ENCODE measurements at regions of chr1 and their contacts with region 1.

Region 1: GRCh38 chr1:16181887-16182719 is 26.2 kb upstream of the EPHA2 start:
- DNase-seq: peak; percentile 93
- ATAC-seq: peak; percentile 92
- H3K4me3 ChIP-seq: no peak overlapping the region
- H3K27ac ChIP-seq: peak overlapping the region in 1 of 2 donors; percentile 81
- H3K4me1 ChIP-seq: peaks cover 0 to 3% of the 10 kb centered on the region in 2 donors
- H3K27me3 ChIP-seq: no peaks in the 10 kb centered on the region

Region 2: DNA sequence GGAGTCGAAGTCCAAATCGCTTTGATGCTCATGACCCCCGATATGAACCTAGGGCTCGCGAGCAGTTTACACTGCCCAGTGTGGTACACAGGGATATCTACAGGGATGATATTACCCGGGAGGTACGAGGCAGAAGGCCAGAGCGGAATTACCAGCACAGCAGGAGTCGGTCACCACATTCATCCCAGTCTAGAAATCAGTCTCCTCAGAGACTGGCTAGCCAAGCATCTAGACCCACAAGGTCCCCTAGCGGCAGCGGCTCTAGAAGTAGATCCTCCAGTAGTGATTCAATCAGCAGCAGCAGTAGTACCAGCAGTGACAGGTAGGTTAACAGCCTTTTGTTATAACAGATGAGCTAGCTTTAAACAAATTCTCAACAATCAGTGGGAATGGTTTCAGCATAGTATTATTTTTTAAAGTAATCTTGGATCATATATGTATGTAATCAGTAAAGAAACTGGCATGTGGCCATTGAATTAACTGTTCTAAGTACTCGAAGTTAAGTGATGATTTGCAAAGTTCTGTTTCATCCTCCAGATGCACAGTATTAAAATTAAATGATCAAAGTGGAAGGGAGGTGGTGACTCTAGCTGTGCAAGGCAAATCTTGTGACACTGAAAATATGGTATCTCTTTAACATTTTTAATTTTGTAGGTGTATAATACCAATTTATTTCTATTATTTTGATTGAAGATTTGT is 305.6 kb before region 1 on chr1:
- intact Hi-C with region 1: no loop called
- DNase-seq: no peak
- ATAC-seq: no peak
- H3K4me3 ChIP-seq: no peak overlapping the region
- H3K27ac ChIP-seq: no peak overlapping the region
- H3K4me1 ChIP-seq: peaks cover 3 to 8% of the 10 kb centered on the region in 2 donors
- H3K27me3 ChIP-seq: no peaks in the 10 kb centered on the region

Region 3: GRCh38 chr1:16146279-16147155 is 35.6 kb before region 1 on chr1:
- intact Hi-C with region 1: loop called in 1 of 2 experiments (anchors 5 kb)
- DNase-seq: peak; percentile 86 to 93
- ATAC-seq: peak; percentile 75
- H3K4me3 ChIP-seq: no peak overlapping the region
- H3K27ac ChIP-seq: peak overlapping the region; percentile 12 to 83
- H3K4me1 ChIP-seq: no peaks in the 10 kb centered on the region
- H3K27me3 ChIP-seq: no peaks in the 10 kb centered on the region

Region 4: DNA sequence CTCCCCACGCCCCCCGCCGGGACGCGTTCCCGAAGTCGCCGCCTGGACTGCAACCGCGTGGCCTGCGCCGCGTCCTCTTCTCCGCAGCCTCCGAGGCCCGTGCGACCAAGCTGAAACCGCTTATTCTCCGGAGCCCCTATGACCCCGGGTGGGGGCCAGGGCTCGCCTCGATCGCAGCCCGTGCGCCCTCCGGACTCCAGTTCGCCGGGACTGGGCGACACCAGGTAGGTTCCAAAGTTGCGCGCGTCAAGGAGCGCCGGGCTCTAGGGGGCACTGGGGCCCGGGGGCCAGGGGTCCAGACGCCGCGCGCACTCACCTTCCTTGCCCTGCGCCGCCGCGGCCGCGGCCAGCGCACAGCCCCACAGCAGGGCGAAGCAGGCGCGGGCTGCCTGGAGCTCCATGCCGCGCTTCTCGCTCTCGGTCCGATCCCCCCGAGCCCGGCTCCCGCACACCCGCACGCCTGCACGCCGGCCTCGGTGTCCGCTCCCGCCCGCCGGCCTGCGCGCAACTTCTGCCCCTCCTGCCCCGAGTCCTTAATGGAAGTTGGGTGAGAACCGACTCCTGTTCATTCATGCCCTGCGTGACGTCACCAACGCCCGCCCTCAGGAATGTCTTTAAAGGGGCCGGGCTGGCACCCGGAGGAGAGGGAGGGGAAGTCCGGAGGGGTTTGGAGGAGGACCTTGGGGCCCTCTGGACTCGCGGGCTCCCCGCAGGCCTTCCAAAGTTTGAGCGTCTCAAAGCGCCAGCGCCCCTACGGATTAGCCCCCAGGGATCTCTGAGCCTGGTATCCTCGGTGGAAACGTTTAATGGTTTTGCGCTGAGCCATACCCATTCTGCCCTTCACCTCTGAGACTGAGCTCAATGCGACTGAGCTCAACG is 26.3 kb before region 1 on chr1 and contains the start of gene EPHA2:
- intact Hi-C with region 1: loop called in 1 of 2 experiments (anchors 2 kb)
- DNase-seq: peak; percentile 94 to 97
- ATAC-seq: peak; percentile 67
- H3K4me3 ChIP-seq: peak within 1 kb of the TSS; percentile 52 to 67
- H3K27ac ChIP-seq: peak within 1 kb of the TSS; percentile 12 to 38
- H3K4me1 ChIP-seq: no peaks in the 10 kb centered on the region
- H3K27me3 ChIP-seq: no peaks in the 10 kb centered on the region
- total RNA-seq, gene EPHA2: 25.2 to 25.9 TPM

Region 5: GRCh38 chr1:16226490-16227179 is 44.5 kb after region 1 on chr1:
- intact Hi-C with region 1: no loop called
- DNase-seq: no peak
- ATAC-seq: peak; percentile 55
- H3K4me3 ChIP-seq: no peak overlapping the region
- H3K27ac ChIP-seq: no peak overlapping the region
- H3K4me1 ChIP-seq: no peaks in the 10 kb centered on the region
- H3K27me3 ChIP-seq: no peaks in the 10 kb centered on the region

Measured in aorta (tissue), 5 donors.